GM12878 (cell line): ENCODE measurements at regions of chr5 and their contacts with region 1.

Region 1: DNA sequence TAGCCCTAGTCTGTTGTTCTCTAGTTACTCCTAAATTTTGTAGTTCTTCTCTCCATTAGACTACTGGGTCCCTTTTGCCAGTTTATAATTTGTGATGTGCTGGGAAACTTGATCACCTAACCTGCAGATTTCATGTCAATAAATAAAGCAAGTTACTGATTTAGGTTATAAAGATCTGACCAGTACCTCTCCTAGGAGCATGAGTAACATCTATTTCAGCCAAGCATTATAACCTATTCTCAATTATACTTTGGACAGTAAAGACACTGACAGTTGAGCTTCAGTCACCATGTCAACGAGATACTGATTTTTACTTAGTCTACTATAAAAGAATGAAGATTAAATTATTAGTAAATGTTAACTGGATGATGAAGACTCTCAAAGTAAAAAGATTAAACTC is 36.7 kb downstream of the CSNK1A1 start:
- DNase-seq: no peak
- ATAC-seq: no peak
- H3K4me3 ChIP-seq: no peak overlapping the region
- H3K27ac ChIP-seq: no peak overlapping the region
- H3K4me1 ChIP-seq: no peaks in the 10 kb centered on the region
- H3K27me3 ChIP-seq: no peaks in the 10 kb centered on the region
- CTCF ChIP-seq: no peak
- EP300 ChIP-seq: no peak
- POLR2A ChIP-seq: no peak
- RAD21 ChIP-seq: no peak

Region 2: DNA sequence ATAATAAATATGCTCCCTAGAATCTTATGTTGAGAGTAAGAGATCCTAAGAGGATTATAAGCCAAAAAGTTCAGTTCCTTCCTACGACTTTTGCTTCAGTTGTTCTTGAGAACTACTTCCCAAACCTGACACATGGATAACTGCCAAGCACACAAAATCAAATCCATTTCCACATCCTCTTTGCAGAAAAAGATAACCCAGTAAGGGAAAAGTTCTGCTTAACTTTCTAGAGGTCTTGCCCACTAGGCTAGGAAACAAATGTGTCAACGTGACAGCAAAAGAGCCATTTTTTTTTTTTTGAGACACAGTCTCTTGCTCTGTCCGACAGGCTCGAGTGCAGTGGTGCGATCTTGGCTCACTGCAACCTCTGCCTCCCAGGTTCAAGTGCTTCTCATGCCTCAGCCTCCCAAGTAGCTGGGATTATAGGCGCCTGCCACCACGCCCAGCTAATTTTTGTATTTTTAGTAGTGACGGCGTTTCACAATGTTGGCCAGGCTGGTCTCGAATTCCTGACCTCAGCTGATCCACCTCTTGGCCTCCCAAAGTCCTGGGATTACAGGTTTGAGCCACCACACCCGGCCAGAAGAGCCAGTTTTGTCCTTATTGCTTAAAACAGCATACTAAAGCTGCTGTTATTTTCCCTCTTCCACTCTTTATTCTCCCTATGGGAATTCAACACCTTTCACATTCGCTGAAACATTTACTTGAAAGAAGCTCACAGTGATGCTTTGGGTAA is 12.5 kb after region 1 on chr5:
- CTCF ChIA-PET with region 1: interaction called, 14 read pairs
- POLR2A ChIA-PET with region 1: no interaction called
- RAD21 ChIA-PET with region 1: no interaction called
- SMC1A ChIA-PET with region 1: interaction called, 15 read pairs
- in situ Hi-C with region 1: no loop called
- intact Hi-C with region 1: no loop called
- DNase-seq: no peak
- ATAC-seq: no peak
- H3K4me3 ChIP-seq: no peak overlapping the region
- H3K27ac ChIP-seq: no peak overlapping the region
- H3K4me1 ChIP-seq: no peaks in the 10 kb centered on the region; the same call in 1 of the 2 replicates
- H3K27me3 ChIP-seq: no peaks in the 10 kb centered on the region
- CTCF ChIP-seq: no peak
- EP300 ChIP-seq: no peak
- POLR2A ChIP-seq: no peak
- RAD21 ChIP-seq: no peak

Region 3: GRCh38 chr5:149551200-149552037 is 36.9 kb after region 1 on chr5 and contains the start of gene CSNK1A1:
- CTCF ChIA-PET with region 1: interaction called, 10 read pairs
- POLR2A ChIA-PET with region 1: interaction called, 8 read pairs
- RAD21 ChIA-PET with region 1: no interaction called
- SMC1A ChIA-PET with region 1: interaction called, 8 read pairs
- in situ Hi-C with region 1: no loop called
- intact Hi-C with region 1: no loop called
- DNase-seq: peak; percentile 98
- ATAC-seq: peak; percentile 91
- H3K4me3 ChIP-seq: peak within 1 kb of the TSS; percentile 82
- H3K27ac ChIP-seq: peak within 1 kb of the TSS; percentile 100
- H3K4me1 ChIP-seq: no peaks in the 10 kb centered on the region; the same call in 1 of the 2 replicates
- H3K27me3 ChIP-seq: no peaks in the 10 kb centered on the region
- CTCF ChIP-seq: peak; percentile 58 to 77 (median 69)
- EP300 ChIP-seq: 0 out of 4 replicates have a peak, but pooled peaks of 1 of the 2 experiments have one; percentile 23
- POLR2A ChIP-seq: peak; percentile 94
- RAD21 ChIP-seq: peak; percentile 51
- polyA plus RNA-seq, gene CSNK1A1: 53.3 to 62.0 TPM